ENCODE measurements at regions of chr6 and their contacts with region 1.

Region 1: GRCh38 chr6:53544470-53545308 is at the start of gene GCLC:
- DNase-seq: peak; percentile 95 to 97 (median 96)
- ATAC-seq: peak; percentile 67 to 85 (median 82)
- H3K4me3 ChIP-seq: peak within 1 kb of the TSS; percentile 66 to 94 (median 78)
- H3K27ac ChIP-seq: peak within 1 kb of the TSS; percentile 82 to 98 (median 95)
- H3K4me1 ChIP-seq: peaks cover 0 to 50% (median 27%) of the 10 kb centered on the region in 12 donors
- H3K27me3 ChIP-seq: no peaks in the 10 kb centered on the region
- CTCF ChIP-seq: peak; percentile 36 to 89 (median 76)
- POLR2A ChIP-seq: peak; percentile 62 to 94
- total RNA-seq, gene GCLC: 15.2 to 42.9 (median 32.4) TPM

Region 2: GRCh38 chr6:53441761-53442160 is 102.9 kb before region 1 on chr6:
- intact Hi-C with region 1: no loop called
- DNase-seq: no peak
- ATAC-seq: no peak
- H3K4me3 ChIP-seq: no peak overlapping the region
- H3K27ac ChIP-seq: no peak overlapping the region
- H3K4me1 ChIP-seq: peaks cover 0 to 27% (median 17%) of the 10 kb centered on the region in 12 donors
- H3K27me3 ChIP-seq: no peaks in the 10 kb centered on the region
- CTCF ChIP-seq: no peak
- POLR2A ChIP-seq: no peak

Region 3: GRCh38 chr6:53492860-53493634 is 51.6 kb before region 1 on chr6:
- intact Hi-C with region 1: loop called in 1 of 10 experiments (anchors 5 kb)
- DNase-seq: no peak
- ATAC-seq: peak; percentile 58 to 80 (median 76)
- H3K4me3 ChIP-seq: peak overlapping the region in 7 of 12 donors; percentile 4 to 37 (median 13)
- H3K27ac ChIP-seq: no peak overlapping the region
- H3K4me1 ChIP-seq: peaks cover 0 to 10% (median 0%) of the 10 kb centered on the region in 12 donors
- H3K27me3 ChIP-seq: no peaks in the 10 kb centered on the region
- CTCF ChIP-seq: peak; percentile 58 to 85 (median 78)
- POLR2A ChIP-seq: no peak

Region 4: DNA sequence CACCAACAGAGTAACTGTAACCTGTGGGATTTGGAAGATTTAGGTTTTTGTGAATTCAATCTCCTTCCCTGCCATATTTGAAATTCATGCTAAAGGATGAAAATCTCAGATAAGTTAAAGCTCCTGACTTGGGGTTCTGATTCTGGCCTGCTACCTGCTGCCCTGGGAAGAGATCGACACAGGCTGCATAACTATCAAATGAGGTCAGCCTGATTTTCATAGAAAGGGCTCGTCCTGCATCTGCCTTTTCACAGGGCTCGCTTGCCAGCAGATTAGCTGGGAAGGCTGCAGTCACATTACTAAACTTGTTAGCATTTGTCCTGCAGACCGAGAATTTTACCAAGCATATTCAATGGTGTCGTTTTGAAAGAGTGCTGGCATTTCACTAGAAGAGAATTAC is 14.3 kb before region 1 on chr6:
- intact Hi-C with region 1: no loop called
- DNase-seq: peak in 4 of 5 donors; percentile 51 to 58 (median 56)
- ATAC-seq: peak; percentile 66 to 90 (median 84)
- H3K4me3 ChIP-seq: peak overlapping the region in 1 of 12 donors; percentile 14
- H3K27ac ChIP-seq: peak overlapping the region in 11 of 12 donors; percentile 29 to 90 (median 62)
- H3K4me1 ChIP-seq: peaks cover 0 to 71% (median 47%) of the 10 kb centered on the region in 12 donors
- H3K27me3 ChIP-seq: no peaks in the 10 kb centered on the region
- CTCF ChIP-seq: no peak
- POLR2A ChIP-seq: no peak

Region 5: DNA sequence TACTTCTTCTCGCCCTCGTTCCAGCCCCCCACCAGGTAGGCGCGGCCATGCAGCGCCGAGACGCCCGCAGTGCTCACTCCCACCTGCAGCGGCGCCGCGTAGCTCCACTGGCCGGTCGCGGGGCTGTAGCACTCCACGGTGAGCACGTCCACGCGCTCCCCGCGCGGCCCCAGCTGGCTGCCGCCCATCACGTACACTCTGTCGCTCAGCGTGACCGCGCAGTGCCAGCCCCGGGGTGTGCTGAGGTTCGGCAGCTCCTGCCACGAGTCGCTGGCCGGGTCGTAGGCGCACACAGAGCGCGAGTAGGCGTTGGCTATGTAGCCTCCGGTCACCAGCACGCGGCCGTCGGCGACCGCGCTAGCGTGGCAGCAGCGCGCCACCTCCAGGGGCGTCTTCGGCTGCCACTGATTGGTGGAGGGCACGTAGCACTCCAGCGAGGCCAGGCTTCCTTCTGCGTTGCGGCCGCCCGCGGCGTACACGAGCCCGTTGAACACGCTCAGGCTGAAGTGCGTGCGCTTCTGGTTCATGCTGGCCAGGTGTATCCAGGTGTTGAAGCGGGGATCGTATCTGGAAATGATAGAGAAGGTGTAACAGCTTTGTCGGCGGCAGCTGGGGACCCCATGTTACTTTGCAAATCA is 107.2 kb after region 1 on chr6:
- intact Hi-C with region 1: loop called in 6 of 10 experiments (anchors 1 to 5 kb)
- DNase-seq: peak; percentile 44 to 83 (median 57)
- ATAC-seq: peak; percentile 42 to 82 (median 78)
- H3K4me3 ChIP-seq: peak overlapping the region; percentile 21 to 66 (median 48)
- H3K27ac ChIP-seq: peak overlapping the region in 5 of 12 donors; percentile 6 to 39 (median 12)
- H3K4me1 ChIP-seq: peaks cover 0 to 62% (median 18%) of the 10 kb centered on the region in 12 donors
- H3K27me3 ChIP-seq: peaks cover 0 to 5% (median 0%) of the 10 kb centered on the region in 9 donors
- CTCF ChIP-seq: peak in 6 of 12 donors; percentile 6 to 35 (median 14)
- POLR2A ChIP-seq: no peak

Region 6: DNA sequence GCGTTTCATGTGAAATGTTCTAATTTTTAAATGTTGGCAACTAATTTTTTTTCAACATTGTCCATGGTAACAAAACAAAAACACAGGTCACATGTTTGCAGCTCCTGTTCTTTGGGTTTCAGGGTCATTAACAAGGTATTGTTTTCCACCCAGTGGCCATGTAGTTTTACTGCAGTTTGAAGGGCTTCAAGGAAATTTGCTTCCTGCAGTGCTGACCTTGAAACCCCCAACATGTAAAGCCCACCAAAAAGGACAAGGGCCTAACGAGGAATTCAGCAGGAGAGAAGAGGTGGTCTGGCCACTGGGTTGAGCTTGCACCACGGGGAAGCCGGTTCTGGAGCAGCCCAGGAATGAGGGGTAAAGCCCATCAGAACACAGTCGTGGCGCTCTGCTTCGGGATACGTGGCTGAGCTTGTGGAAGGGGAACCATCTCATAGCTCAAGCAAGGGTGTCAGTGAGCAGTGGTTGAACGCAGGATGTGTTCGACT is 134.8 kb after region 1 on chr6:
- intact Hi-C with region 1: loop called in 1 of 10 experiments (anchors 5 kb)
- DNase-seq: no peak
- ATAC-seq: peak; percentile 64 to 81 (median 76)
- H3K4me3 ChIP-seq: no peak overlapping the region
- H3K27ac ChIP-seq: peak overlapping the region in 4 of 12 donors; percentile 10 to 51 (median 50)
- H3K4me1 ChIP-seq: peaks cover 0 to 11% (median 0%) of the 10 kb centered on the region in 12 donors
- H3K27me3 ChIP-seq: no peaks in the 10 kb centered on the region
- CTCF ChIP-seq: peak; percentile 27 to 53 (median 40)
- POLR2A ChIP-seq: no peak

Region 7: DNA sequence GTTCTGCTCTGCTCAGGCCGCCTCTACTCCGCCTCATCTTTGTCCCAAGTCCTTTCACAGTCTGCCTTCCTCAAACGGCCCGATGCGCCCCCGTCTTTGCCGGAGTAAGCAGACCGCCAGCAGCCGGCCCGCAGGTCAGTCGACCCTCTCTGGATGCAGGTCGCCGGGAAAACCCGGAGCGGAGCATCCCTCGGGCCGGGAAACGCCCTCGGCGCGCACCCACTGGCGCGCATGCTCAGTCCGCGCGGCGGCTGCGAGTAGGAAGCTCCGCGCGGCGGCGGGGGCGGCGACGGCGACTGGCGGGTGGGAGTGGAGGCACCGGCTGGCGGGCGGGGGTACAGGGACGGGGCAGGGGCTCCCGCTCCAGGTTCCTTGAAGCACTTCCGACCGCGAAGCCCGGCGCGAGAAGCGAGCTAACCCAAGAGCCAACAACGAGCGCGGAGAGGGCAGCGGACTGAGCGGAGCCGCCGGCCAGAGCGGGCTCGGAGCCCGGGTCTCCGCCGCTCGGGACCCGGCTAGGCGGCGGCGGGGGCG is 250.1 kb after region 1 on chr6 and contains the start of gene LRRC1:
- intact Hi-C with region 1: loop called in 1 of 10 experiments (anchors 10 kb)
- DNase-seq: peak; percentile 92 to 96 (median 93)
- ATAC-seq: peak; percentile 79 to 95 (median 93)
- H3K4me3 ChIP-seq: peak within 1 kb of the TSS; percentile 65 to 96 (median 85)
- H3K27ac ChIP-seq: peak within 1 kb of the TSS; percentile 47 to 89 (median 78)
- H3K4me1 ChIP-seq: peaks cover 0 to 24% (median 11%) of the 10 kb centered on the region in 12 donors
- H3K27me3 ChIP-seq: peaks cover 0 to 3% (median 0%) of the 10 kb centered on the region in 9 donors
- CTCF ChIP-seq: no peak
- POLR2A ChIP-seq: peak in 1 of 2 donors; percentile 61
- total RNA-seq, gene LRRC1: 1.2 to 11.2 (median 3.6) TPM

Measured in heart left ventricle (tissue), 16 donors.